HEK293 (cell line): ENCODE measurements at regions of chr6 and their contacts with region 1.

Region 1: GRCh38 chr6:30453508-30454116 is 35.7 kb upstream of the HLA-E start:
- H3K4me3 ChIP-seq: no peak overlapping the region
- H3K27ac ChIP-seq: no peak overlapping the region
- H3K4me1 ChIP-seq: no peaks in the 10 kb centered on the region
- CTCF ChIP-seq: peak; percentile 97

Region 2: GRCh38 chr6:30127238-30128093 is 326.1 kb before region 1 on chr6:
- CTCF ChIA-PET with region 1: no interaction called
- POLR2A ChIA-PET with region 1: no interaction called
- H3K4me3 ChIP-seq: no peak overlapping the region
- H3K27ac ChIP-seq: no peak overlapping the region
- H3K4me1 ChIP-seq: no peaks in the 10 kb centered on the region
- CTCF ChIP-seq: no peak

Region 3: DNA sequence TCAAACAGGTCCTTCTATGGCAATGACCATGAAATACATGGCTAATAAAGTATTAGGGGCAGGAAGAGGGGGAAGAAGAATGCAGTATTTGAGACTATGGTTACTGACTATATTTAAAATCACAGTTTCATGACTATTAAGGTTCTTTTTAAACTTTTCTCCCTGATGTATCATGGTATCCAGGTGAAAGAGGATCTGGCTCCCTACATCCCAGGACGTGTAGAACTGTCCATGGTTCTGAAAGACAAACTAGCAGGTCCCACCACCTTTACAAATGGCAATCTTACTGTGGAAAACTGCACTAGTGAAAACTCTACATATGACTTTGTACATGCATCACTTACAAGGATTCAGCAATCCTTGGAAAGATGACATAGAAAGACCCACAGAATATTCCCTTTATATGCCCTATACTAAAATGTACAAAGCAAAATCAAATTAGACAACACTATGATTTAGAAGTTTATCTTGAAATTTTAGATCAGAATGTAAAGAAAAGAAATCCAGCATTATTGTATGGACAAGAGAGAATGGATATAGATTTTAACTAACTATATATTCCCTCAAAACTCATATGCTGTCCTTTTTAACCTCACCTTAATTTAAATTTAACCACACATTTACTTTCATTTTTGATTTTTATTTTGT is 75.2 kb before region 1 on chr6:
- CTCF ChIA-PET with region 1: interaction called, 11 read pairs
- POLR2A ChIA-PET with region 1: no interaction called
- H3K4me3 ChIP-seq: no peak overlapping the region
- H3K27ac ChIP-seq: no peak overlapping the region
- H3K4me1 ChIP-seq: no peaks in the 10 kb centered on the region
- CTCF ChIP-seq: no peak

Region 4: GRCh38 chr6:30411515-30412207 is 42.0 kb before region 1 on chr6:
- CTCF ChIA-PET with region 1: interaction called, 24 read pairs
- POLR2A ChIA-PET with region 1: no interaction called
- H3K4me3 ChIP-seq: no peak overlapping the region
- H3K27ac ChIP-seq: no peak overlapping the region
- H3K4me1 ChIP-seq: no peaks in the 10 kb centered on the region
- CTCF ChIP-seq: peak; percentile 41; the same call in 1 of the 2 replicates

Region 5: DNA sequence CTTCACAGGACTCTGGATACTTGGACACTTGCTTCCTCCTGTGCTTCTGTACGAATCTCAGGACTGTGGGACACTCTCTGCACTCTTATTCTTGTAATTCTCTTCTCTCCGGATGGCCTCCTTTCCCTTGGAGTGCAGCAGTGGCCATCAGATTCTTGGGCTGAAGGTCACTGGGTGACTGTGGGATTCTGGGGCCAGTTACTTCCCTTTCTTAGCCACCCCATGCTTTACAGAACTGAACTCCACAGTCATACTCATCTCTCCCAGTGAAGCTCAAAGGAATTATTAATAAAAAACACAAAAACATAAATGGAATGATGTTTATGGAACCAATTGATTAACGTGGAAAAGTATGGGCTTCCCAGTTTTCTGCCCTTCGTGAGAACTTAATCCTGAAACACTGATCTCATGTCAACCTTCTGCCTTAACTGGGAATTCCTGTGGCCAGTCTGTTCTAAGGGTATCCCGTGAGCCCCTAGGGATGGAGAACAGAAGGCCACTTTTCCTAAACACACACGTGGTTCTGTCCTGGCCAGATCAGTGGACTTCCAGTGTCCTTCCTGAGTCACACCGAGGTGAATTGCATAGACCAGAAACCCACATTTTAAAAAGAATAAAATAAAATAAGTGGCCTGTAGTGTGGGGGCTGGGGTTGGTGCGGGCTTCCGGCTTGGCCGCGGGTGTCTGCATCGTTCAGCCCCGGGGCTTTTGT is 12.1 kb after region 1 on chr6:
- CTCF ChIA-PET with region 1: interaction called, 102 read pairs
- POLR2A ChIA-PET with region 1: no interaction called
- H3K4me3 ChIP-seq: no peak overlapping the region
- H3K27ac ChIP-seq: no peak overlapping the region
- H3K4me1 ChIP-seq: no peaks in the 10 kb centered on the region
- CTCF ChIP-seq: no peak

Region 6: DNA sequence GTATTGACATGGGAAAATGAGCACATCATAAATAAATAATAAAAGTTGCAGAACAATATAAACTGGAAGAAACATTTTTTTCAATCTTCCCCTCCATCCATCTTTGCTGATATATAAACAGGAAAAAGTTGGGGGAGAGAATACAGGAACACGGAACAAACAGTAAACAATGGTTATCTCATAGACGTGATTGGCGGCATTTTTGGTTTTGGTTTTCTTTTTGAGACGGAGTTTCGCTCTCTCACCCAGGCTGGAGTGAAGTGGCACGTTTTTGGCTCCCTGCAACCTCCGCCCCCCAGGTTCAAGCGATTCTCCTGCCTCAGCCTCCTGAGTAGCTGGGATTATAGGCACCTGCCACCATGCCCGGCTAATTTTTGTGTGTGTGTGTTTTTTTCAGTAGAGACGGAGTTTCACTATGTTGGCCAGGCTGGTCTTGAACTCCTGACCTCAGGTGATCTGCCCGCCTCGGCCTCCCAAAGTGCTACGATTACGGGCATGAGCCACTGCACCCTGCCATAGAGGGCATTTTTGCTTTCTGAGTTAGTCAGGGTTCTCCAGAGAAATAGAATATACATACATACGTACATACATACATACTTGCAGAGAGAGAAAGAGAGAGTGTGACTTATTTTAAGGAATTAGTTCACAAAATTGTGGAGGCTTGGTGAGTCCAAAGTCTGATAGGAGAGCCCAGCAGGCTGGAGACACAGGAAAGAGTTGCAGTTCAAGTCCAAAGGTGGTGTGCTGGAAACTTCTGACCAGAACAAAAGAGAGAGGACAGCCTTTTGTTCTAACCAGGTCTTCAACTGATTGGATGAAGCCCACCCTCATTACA is 80.1 kb after region 1 on chr6:
- CTCF ChIA-PET with region 1: interaction called, 10 read pairs
- POLR2A ChIA-PET with region 1: no interaction called
- H3K4me3 ChIP-seq: no peak overlapping the region
- H3K27ac ChIP-seq: no peak overlapping the region
- H3K4me1 ChIP-seq: no peaks in the 10 kb centered on the region
- CTCF ChIP-seq: no peak

Region 7: DNA sequence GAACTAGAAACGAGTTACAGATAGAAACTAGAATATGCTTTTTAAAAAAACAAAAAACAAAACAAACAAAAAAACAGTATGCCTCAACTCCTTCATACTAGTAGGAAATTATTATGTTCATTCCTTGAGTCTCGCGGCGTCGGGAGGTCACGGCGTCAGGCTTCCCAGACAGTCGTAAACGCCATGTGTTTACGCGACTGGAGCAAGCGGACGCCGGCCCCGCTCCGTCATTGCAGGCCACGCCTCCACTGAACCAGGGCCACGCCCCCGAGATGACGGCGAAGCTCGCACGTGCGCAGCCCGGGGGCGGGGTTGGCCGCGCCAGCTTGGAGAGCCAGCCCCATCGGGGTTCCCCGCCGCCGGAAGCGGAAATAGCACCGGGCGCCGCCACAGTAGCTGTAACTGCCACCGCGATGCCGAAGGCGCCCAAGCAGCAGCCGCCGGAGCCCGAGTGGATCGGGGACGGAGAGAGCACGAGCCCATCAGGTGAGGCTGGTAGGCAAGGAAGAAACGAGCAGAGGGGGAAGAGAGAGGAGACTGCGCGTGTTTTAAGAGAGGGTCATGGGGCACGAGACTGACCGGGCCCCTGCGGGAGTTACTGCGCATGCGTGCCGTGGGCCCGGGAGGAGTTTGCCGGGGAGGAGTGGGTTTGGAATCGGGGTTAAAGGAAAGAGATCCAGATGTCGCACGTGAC is 117.6 kb after region 1 on chr6 and contains the start of gene ABCF1:
- CTCF ChIA-PET with region 1: no interaction called
- POLR2A ChIA-PET with region 1: no interaction called
- H3K4me3 ChIP-seq: peak within 1 kb of the TSS; percentile 94
- H3K27ac ChIP-seq: peak within 1 kb of the TSS; percentile 64
- H3K4me1 ChIP-seq: peaks cover 9% of the 10 kb centered on the region; the same call in 1 of the 2 replicates
- CTCF ChIP-seq: no peak

Region 8: GRCh38 chr6:30603961-30604360 is 150.3 kb after region 1 on chr6:
- CTCF ChIA-PET with region 1: no interaction called
- POLR2A ChIA-PET with region 1: no interaction called
- H3K4me3 ChIP-seq: no peak overlapping the region
- H3K27ac ChIP-seq: 0 out of 2 replicates have a peak overlapping the region, but pooled peaks have one; percentile 20
- H3K4me1 ChIP-seq: no peaks in the 10 kb centered on the region
- CTCF ChIP-seq: no peak

Region 9: DNA sequence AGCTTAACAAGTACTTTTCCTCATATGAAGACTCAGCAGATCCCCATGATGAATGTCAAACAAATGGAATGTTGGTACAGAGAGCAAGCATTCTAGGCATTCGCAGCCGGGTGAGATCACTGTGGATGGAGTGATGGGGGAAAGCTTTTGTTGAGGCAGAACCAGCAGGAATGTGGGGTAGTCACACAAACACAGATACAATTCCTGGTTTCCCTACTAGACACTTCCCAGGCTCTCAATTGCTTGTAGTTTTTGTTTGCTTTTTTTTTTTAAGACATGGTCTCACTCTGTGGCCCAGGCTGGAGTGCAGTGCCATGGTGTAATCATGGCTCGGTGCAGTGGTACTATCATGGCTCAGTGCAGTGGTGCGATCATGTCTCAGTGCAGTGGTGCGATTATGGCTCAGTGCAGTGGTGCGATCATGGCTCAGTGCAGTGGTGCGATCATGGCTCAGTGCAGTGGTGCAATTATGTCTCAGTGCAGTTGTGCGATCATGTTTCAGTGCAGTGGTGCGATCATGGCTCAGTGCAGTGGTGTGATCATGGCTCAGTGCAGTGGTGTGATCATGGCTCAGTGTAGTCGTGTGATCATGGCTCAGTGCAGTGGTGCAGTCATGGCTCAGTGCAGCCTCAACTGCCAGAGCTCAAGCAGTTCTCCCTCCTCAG is 306.1 kb after region 1 on chr6:
- CTCF ChIA-PET with region 1: no interaction called
- POLR2A ChIA-PET with region 1: no interaction called
- H3K4me3 ChIP-seq: no peak overlapping the region
- H3K27ac ChIP-seq: no peak overlapping the region
- H3K4me1 ChIP-seq: peaks cover 13% of the 10 kb centered on the region
- CTCF ChIP-seq: no peak